Heart right ventricle (tissue), 16 donors: ENCODE measurements at regions of chr3 and their contacts with region 1.

Region 1: GRCh38 chr3:151468284-151468917 is 7.5 kb upstream of the IGSF10 start:
- DNase-seq: peak in 1 of 2 donors; percentile 45
- ATAC-seq: peak in 6 of 8 donors; percentile 43 to 76 (median 70)
- H3K4me3 ChIP-seq: no peak overlapping the region
- H3K27ac ChIP-seq: no peak overlapping the region
- H3K4me1 ChIP-seq: peaks cover 0 to 5% (median 0%) of the 10 kb centered on the region in 9 donors
- H3K27me3 ChIP-seq: peaks cover 0 to 20% (median 0%) of the 10 kb centered on the region in 7 donors
- CTCF ChIP-seq: peak; percentile 73 to 92 (median 81)

Region 2: GRCh38 chr3:151660885-151661284 is 192.5 kb after region 1 on chr3:
- intact Hi-C with region 1: loop called in 1 of 10 experiments (anchors 10 kb)
- DNase-seq: no peak
- ATAC-seq: no peak
- H3K4me3 ChIP-seq: no peak overlapping the region
- H3K27ac ChIP-seq: no peak overlapping the region
- H3K4me1 ChIP-seq: no peaks in the 10 kb centered on the region
- H3K27me3 ChIP-seq: no peaks in the 10 kb centered on the region
- CTCF ChIP-seq: peak in 4 of 9 donors; percentile 10 to 39 (median 34)

Region 3: DNA sequence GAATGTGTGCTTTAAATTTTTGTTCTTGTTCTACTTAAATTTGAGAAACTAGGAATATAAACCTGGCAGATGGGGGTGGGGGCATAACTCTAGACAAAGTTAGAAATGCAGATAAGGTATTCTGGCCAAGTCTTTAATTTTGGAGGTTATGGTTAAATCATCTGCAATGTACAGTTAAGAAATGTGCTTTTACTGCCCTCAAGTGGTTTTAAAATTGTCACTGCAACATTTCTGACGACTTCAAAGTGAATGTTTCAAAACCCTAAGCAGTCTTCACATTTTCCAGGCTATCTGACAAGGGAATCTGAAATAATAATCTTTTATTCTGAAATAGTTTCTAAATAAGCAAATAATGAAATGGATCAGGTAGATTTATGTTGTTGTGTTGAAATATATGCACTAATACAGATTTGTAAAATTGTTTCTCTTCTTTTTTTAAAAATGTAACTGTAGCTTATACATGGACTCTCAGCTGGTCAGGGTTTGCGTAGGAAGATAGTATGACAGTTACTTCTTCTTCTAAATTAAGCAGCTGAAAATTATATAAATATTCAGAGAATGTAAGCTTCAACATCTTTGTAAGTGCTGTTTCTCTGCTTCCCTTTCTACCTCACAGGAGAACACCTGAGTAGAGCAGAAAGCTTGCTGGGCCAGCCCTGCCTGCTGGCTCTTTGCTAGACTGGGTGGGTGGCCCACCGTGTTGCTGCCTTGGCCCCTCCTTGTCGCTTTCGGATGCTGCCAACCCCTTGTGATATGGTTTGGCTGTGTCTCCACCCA is 450.0 kb after region 1 on chr3:
- intact Hi-C with region 1: loop called in 2 of 10 experiments (anchors 10 kb)
- DNase-seq: no peak
- ATAC-seq: peak in 5 of 8 donors; percentile 39 to 65 (median 50)
- H3K4me3 ChIP-seq: no peak overlapping the region
- H3K27ac ChIP-seq: no peak overlapping the region
- H3K4me1 ChIP-seq: peaks cover 0 to under 1% (median 0%) of the 10 kb centered on the region in 9 donors
- H3K27me3 ChIP-seq: no peaks in the 10 kb centered on the region
- CTCF ChIP-seq: peak; percentile 33 to 78 (median 69)

Region 4: DNA sequence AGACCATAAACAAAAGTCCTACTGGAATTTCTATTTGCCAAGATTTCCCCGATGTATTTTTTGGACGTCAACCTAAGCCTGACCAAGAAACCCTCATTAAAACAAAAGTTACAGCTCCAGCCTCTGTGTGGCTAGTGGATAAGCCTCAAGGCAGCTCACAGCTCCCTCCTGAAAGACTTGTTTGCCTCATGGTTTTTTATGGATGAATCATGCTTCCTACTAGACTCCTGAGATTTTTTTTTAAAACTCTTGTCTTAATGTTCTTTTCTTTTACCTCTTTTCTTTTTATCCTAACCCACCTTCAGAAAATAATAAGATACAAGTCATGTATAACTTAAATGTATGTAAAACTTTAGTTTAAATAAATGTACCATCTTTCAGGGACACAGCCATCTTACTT is 457.5 kb after region 1 on chr3:
- intact Hi-C with region 1: loop called in 1 of 10 experiments (anchors 10 kb)
- DNase-seq: no peak
- ATAC-seq: no peak
- H3K4me3 ChIP-seq: no peak overlapping the region
- H3K27ac ChIP-seq: no peak overlapping the region
- H3K4me1 ChIP-seq: peaks cover 0 to 12% (median 0%) of the 10 kb centered on the region in 9 donors
- H3K27me3 ChIP-seq: no peaks in the 10 kb centered on the region
- CTCF ChIP-seq: no peak